Activated CD8-positive, alpha-beta memory T cell treated with anti-CD3 and anti-CD28 coated beads, Interleukin-2, amount 10 ng/mL, durations not matched to agents 7 days and 5 days (primary cell): ENCODE measurements at regions of chr4 and their contacts with region 1.

Region 1: DNA sequence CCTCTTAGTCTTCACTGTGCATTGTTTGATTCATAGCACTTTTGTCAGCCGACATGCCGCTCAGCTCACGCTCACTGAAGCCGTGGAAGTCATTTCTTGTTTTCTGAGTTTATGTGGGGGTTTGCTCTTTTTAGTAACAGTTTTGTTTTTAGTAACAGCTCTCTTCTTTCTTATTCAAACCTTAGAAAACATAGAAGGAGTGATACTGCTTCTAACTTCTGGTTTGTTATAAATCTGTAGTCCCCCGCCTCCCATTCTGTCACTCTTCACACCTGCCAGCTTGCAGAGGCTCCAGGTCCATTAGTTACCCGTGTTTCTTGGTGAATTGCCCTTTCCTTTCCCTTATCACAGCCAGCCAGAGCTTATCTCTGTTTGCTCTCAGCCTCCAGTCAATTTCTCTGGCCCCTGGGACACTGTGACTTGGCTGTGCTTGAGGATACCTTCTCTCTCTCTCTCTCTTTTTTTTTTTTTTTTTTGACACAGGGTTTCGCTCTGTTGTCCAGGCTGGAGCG is 50.5 kb downstream of the GRK4 start:
- DNase-seq: peak; percentile 52
- ATAC-seq: peak; percentile 74
- H3K4me3 Mint-ChIP-seq: no peak overlapping the region
- H3K27ac Mint-ChIP-seq: peak overlapping the region; percentile 71
- H3K4me1 Mint-ChIP-seq: peaks cover 21% of the 10 kb centered on the region
- H3K27me3 Mint-ChIP-seq: peaks cover 23% of the 10 kb centered on the region

Region 2: GRCh38 chr4:3037957-3038461 is 24.1 kb after region 1 on chr4:
- CTCF ChIA-PET with region 1: interaction called, 26 read pairs
- DNase-seq: no peak
- ATAC-seq: no peak
- H3K4me3 Mint-ChIP-seq: peak overlapping the region; percentile 12
- H3K27ac Mint-ChIP-seq: peak overlapping the region; percentile 61
- H3K4me1 Mint-ChIP-seq: peaks cover 50% of the 10 kb centered on the region
- H3K27me3 Mint-ChIP-seq: peaks cover 18% of the 10 kb centered on the region